Keratinocyte (primary cell): ENCODE measurements at regions of chr7 and their contacts with region 1.

Region 1: DNA sequence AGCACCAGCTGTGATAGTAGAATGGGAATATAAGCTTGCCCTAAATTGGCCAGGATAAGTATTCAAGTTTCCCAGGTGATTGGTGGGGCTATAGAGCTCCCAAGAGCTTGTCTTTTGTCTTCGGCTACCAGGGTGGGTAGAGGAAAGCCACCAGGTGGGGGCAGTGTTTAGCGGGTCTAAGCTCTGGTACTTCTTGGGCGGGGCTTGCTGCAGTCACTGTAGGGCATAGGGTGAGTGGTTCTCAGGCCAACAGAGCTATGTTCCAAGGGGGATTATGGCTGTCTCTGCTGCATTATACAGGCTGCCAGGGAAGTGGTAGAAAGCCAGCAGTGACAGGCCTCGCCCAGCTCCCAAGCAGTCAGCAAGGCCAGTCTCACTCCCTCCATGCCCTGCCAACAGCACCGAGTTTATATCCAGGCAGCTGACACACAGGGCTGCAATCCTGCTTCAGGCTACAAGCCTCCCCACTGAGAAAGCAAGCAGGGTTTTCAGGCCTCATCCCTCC is 110.7 kb downstream of the ZNF467 start:
- DNase-seq: peak; percentile 32
- H3K4me3 ChIP-seq: no peak overlapping the region
- H3K27ac ChIP-seq: no peak overlapping the region
- H3K4me1 ChIP-seq: no peaks in the 10 kb centered on the region
- H3K27me3 ChIP-seq: peaks cover 4% of the 10 kb centered on the region
- CTCF ChIP-seq: peak; percentile 71 to 73 (median 72)

Region 2: DNA sequence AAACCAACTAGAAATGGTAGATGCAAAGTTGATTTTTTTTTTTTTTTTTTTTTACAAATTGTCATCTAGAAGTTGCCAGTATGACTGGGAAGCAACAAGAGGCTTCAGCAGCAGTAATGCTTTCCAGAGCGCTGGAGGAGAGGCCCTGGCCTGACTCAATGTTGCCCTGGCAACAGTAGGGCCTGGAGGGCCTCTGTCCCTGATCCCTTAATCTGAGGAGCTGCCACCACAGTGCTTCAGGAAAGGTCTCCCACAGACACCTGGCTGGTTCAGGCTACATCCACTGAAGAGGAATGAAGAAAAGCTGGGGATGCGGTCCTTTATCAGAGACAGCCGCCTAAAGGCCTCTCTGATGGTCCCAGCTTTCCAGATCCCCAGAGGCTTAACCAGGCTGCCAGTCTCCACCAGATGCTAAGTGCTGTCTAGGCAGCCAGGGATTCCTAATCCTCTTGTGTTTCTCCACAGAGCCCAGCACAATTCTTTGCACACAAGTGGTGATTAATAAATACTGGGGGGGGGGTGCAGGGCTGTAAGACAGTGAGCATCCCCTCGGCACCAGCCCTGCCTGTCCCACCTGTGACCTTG is 235.5 kb before region 1 on chr7:
- dilution Hi-C with region 1: no loop called
- DNase-seq: no peak
- H3K4me3 ChIP-seq: no peak overlapping the region
- H3K27ac ChIP-seq: no peak overlapping the region
- H3K4me1 ChIP-seq: no peaks in the 10 kb centered on the region
- H3K27me3 ChIP-seq: no peaks in the 10 kb centered on the region
- CTCF ChIP-seq: no peak

Region 3: GRCh38 chr7:149748076-149748874 is 85.6 kb after region 1 on chr7:
- dilution Hi-C with region 1: loop called (anchors 5 kb)
- DNase-seq: no peak
- H3K4me3 ChIP-seq: no peak overlapping the region
- H3K27ac ChIP-seq: no peak overlapping the region
- H3K4me1 ChIP-seq: no peaks in the 10 kb centered on the region
- H3K27me3 ChIP-seq: no peaks in the 10 kb centered on the region
- CTCF ChIP-seq: no peak

Region 4: DNA sequence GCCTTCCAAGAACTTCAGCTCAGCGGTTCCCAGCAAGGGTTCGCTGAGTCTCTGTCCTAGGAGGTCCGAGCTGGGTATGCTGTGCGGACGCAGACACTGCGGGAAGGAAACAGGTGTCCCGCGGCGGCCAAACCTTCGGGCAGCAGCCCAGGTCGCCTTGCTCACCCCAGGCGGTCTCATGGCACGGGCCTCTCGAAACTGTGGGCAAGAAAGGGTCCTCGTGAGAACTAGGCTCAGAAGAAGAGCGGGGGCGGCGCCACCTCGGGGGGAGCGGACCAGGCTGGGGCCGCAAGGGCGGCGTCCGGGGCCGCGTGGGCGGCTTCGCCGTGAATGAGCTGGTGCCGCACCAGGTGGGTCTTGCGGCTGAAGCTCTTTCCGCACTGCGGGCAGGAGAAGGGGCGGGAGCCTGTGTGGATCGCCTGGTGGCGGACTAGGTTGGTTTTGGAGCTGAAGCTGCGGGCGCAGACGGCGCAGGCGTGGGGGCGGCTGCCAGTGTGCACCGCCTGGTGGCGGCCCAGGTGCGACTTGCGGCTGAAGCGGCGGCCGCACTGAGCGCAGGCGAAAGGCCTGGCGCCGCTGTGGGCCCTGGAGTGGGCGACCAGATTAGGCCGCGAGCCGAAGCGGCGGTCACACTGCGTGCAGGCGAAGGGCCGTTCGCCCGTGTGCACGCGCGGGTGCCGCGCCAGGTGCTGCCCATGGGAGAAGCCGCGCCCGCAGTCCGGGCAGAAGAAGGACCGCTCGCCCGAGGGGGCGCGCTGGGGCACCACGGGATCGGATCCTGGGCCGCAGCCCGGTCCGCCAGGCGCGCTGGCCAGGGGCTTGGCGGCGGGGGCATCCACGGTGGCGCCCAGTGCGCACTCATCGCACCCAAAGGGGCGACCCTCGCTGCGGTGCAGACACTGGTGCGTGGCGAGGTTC is 102.1 kb after region 1 on chr7:
- dilution Hi-C with region 1: no loop called
- DNase-seq: no peak
- H3K4me3 ChIP-seq: no peak overlapping the region
- H3K27ac ChIP-seq: no peak overlapping the region
- H3K4me1 ChIP-seq: no peaks in the 10 kb centered on the region
- H3K27me3 ChIP-seq: peaks cover 6% of the 10 kb centered on the region
- CTCF ChIP-seq: no peak

Region 5: DNA sequence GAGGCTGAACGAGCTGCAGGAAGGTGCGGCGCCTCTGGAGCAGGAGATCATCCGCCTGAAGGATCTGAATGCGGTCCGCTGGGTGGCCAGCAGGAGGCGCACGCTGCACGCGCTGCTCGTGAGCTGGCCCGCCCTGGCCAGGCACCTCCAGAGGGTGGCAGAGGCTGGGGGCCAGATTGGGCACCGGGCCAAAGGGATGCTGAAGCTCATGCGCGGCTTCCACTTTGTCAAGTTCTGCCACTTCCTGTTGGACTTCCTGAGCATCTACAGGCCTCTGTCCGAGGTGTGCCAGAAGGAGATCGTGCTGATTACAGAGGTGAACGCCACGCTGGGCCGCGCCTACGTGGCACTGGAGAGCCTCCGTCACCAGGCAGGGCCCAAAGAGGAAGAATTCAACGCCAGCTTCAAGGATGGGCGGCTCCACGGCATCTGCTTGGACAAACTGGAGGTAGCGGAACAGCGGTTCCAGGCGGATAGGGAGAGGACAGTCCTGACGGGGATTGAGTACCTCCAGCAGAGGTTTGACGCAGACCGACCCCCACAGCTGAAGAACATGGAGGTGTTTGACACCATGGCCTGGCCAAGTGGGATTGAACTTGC is 198.9 kb after region 1 on chr7:
- dilution Hi-C with region 1: no loop called
- DNase-seq: no peak
- H3K4me3 ChIP-seq: no peak overlapping the region
- H3K27ac ChIP-seq: no peak overlapping the region
- H3K4me1 ChIP-seq: no peaks in the 10 kb centered on the region
- H3K27me3 ChIP-seq: no peaks in the 10 kb centered on the region
- CTCF ChIP-seq: peak in 1 of 3 experiments; percentile 25